ENCODE measurements at regions of chr7 and their contacts with region 1.

Region 1: GRCh38 chr7:132318352-132319318 is 257.6 kb downstream of the PLXNA4 start:
- DNase-seq: peak; percentile 78 to 92 (median 87)
- H3K4me3 ChIP-seq: no peak overlapping the region
- H3K27ac ChIP-seq: no peak overlapping the region
- H3K4me1 ChIP-seq: peaks cover 3% of the 10 kb centered on the region
- H3K27me3 ChIP-seq: no peaks in the 10 kb centered on the region
- CTCF ChIP-seq: peak; percentile 85 to 90 (median 87)
- EP300 ChIP-seq: no peak
- POLR2A ChIP-seq: no peak

Region 2: GRCh38 chr7:131945313-131945911 is 373.2 kb before region 1 on chr7:
- intact Hi-C with region 1: loop called in 1 of 4 experiments (anchors 10 kb)
- DNase-seq: peak; percentile 17 to 68 (median 27)
- H3K4me3 ChIP-seq: no peak overlapping the region
- H3K27ac ChIP-seq: no peak overlapping the region
- H3K4me1 ChIP-seq: peaks cover 3% of the 10 kb centered on the region
- H3K27me3 ChIP-seq: no peaks in the 10 kb centered on the region
- CTCF ChIP-seq: peak in 2 of 3 donors; percentile 51 to 72
- EP300 ChIP-seq: no peak
- POLR2A ChIP-seq: no peak

Region 3: DNA sequence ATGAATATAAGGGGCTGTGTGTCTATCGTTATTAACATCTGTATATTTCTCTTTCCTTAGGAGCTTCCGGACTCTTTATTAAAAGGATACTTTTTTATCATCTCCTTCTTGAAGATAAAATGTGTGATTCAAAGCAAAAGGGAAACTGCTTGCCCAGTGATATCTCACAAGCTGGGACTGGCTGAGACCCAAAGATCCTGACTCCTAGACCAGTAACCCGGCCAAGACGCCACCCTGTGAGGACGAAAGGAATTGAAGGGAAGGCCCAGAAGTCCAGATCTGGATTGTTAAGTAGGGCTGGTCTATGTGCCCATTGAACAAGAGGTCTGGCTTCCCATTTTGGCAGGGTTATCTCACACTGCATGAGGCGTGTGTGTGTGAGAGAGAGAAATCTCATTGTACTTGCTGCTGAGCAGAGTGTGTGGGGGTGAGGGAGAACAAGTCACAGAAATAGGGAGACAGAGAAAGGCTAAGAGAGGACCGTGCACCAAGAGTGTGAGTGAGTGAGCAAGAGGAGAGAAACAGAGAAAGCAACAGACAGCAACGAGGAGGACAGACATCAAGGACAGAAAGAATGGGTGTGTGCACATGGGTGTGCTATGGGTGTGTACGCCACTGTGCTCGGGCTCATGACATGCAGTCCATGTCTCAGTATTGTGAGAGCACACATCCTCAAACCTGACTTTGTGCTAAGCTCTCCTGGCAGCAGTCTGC is 182.2 kb after region 1 on chr7:
- intact Hi-C with region 1: loop called in 2 of 4 experiments (anchors 5 to 10 kb)
- DNase-seq: peak; percentile 59 to 79 (median 75)
- H3K4me3 ChIP-seq: no peak overlapping the region
- H3K27ac ChIP-seq: no peak overlapping the region
- H3K4me1 ChIP-seq: peaks cover 7% of the 10 kb centered on the region
- H3K27me3 ChIP-seq: no peaks in the 10 kb centered on the region
- CTCF ChIP-seq: peak; percentile 16 to 48 (median 45)
- EP300 ChIP-seq: no peak
- POLR2A ChIP-seq: no peak

Measured in ovary (tissue), 10 donors.